BJ (cell line): ENCODE measurements at regions of chr7 and their contacts with region 1.

Region 1: GRCh38 chr7:121994625-121995410 is 121.9 kb downstream of the PTPRZ1 start:
- DNase-seq: peak; percentile 16
- H3K4me3 ChIP-seq: no peak overlapping the region
- H3K27me3 ChIP-seq: no peaks in the 10 kb centered on the region
- CTCF ChIP-seq: peak; percentile 80

Region 2: GRCh38 chr7:121752706-121753105 is 242.1 kb before region 1 on chr7:
- CTCF ChIA-PET with region 1: interaction called, 25 read pairs
- POLR2A ChIA-PET with region 1: no interaction called
- DNase-seq: no peak
- H3K4me3 ChIP-seq: no peak overlapping the region
- H3K27me3 ChIP-seq: no peaks in the 10 kb centered on the region
- CTCF ChIP-seq: peak; percentile 45

Region 3: DNA sequence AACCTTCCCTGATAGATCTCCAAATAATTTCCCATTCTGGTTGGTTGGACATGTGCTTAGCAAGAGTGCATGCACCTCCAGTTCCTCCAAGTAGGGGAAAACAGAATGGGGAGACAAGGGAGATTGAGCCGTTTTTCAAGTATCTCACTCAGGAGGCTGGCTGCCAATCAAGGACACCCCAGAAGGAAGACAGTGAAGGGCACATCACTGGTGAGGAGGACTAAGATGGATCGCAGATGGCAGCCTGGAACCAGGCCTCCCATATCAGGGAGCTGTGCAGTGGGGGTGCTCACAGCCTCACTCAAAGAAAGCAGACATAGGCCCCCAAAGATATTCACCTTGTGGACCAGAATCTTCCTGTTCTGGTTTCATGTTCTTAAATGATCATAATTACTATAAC is 90.7 kb before region 1 on chr7:
- CTCF ChIA-PET with region 1: no interaction called
- POLR2A ChIA-PET with region 1: no interaction called
- DNase-seq: no peak
- H3K4me3 ChIP-seq: no peak overlapping the region
- H3K27me3 ChIP-seq: no peaks in the 10 kb centered on the region
- CTCF ChIP-seq: no peak

Region 4: GRCh38 chr7:122006687-122007086 is 11.9 kb after region 1 on chr7:
- CTCF ChIA-PET with region 1: interaction called, 23 read pairs
- POLR2A ChIA-PET with region 1: no interaction called
- DNase-seq: no peak
- H3K4me3 ChIP-seq: no peak overlapping the region
- H3K27me3 ChIP-seq: no peaks in the 10 kb centered on the region
- CTCF ChIP-seq: no peak